ENCODE measurements at regions of chr13 and their contacts with region 1.

Region 1: DNA sequence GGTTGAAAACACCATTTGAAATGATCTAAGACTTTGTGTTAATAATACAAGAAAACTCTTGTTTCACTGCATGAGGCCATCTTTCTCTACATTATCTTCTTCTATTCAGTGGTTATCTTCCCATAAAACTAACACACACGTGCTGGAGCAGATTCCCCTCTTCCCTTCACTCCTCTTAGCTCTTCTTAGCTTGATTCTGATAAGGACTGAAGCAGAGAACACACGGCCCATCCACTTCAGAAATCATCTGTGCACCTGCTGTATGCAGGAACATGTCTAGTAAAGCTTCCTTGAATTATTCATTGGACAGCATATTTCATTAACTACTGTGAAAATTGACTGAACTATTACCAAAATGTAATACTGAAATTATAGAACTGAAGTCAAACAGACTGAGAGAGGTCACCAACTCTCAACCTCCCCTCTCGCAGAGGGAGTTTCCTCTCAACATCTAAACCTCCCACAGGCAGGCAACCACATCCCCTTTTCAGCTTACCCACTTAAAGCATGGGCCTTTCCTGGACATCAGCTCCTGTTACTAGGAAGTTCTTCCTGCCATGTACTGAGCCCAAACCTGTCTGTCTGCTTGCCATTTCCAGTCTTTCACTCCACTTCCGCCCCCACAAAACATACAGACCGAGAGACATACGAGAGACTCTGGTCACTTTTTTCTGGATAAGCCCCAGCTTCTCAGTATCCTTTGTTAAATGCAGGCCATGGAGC is 113.9 kb downstream of the CRYL1 start:
- DNase-seq: peak; percentile 78
- H3K4me3 Mint-ChIP-seq: no peak overlapping the region
- H3K27ac Mint-ChIP-seq: peak overlapping the region; percentile 50
- H3K4me1 Mint-ChIP-seq: peaks cover 21% of the 10 kb centered on the region
- H3K27me3 Mint-ChIP-seq: no peaks in the 10 kb centered on the region

Region 2: DNA sequence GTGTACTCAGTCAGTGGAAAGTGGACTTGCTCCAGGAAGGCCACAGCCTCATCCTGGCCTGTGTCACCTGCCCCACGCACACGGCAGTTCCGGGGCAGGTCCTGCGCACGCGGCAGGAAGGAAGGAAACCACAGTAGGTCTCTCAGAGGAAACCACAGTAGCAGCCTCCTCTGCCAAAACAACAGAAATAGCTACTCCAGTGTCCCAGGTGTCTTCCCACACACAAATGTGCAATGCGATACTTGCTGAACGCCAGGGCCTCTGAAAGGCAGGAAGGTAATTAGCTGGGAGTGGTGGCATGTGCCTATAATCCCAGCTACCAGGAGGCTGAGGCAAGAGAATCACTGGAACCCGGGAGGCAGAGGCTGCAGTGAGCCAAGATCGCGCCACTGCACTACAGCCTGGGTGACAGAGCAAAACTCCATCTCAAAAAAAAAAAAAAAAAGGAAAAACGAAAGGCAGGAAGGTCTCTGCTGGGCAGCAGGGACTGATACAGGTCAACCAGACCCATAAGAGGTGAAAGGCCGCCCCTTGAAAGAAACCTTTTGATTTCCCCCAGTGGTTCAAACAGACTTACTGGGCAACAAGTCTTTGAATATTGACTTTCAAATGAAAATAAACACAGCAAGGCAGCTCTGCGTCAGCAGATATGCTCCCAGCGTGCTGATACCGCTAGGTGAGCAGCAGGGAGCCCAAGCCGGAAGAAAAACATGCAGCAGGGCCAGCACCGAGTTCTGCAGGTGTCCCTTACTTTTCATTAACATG is 64.3 kb after region 1 on chr13:
- CTCF ChIA-PET with region 1: interaction called, 4 read pairs
- intact Hi-C with region 1: loop called (anchors 1 kb)
- DNase-seq: peak; percentile 82
- H3K4me3 Mint-ChIP-seq: peak overlapping the region; percentile 65
- H3K27ac Mint-ChIP-seq: peak overlapping the region; percentile 92
- H3K4me1 Mint-ChIP-seq: peaks cover 27% of the 10 kb centered on the region
- H3K27me3 Mint-ChIP-seq: no peaks in the 10 kb centered on the region

Region 3: GRCh38 chr13:20489185-20489820 is 77.5 kb after region 1 on chr13:
- CTCF ChIA-PET with region 1: interaction called, 5 read pairs
- intact Hi-C with region 1: loop called (anchors 1 kb)
- DNase-seq: peak; percentile 30
- H3K4me3 Mint-ChIP-seq: no peak overlapping the region
- H3K27ac Mint-ChIP-seq: no peak overlapping the region
- H3K4me1 Mint-ChIP-seq: no peaks in the 10 kb centered on the region
- H3K27me3 Mint-ChIP-seq: no peaks in the 10 kb centered on the region

Region 4: GRCh38 chr13:21670883-21671619 is 1259.3 kb after region 1 on chr13 and contains the start of gene FGF9:
- CTCF ChIA-PET with region 1: no interaction called
- intact Hi-C with region 1: no loop called
- DNase-seq: peak; percentile 79
- H3K4me3 Mint-ChIP-seq: peak within 1 kb of the TSS; percentile 80
- H3K27ac Mint-ChIP-seq: no peak within 1 kb of the TSS
- H3K4me1 Mint-ChIP-seq: peaks cover 34% of the 10 kb centered on the region
- H3K27me3 Mint-ChIP-seq: peaks cover 32% of the 10 kb centered on the region
- total RNA-seq, gene FGF9: not detected

Measured in activated naive CD4-positive, alpha-beta T cell treated with anti-CD3 and anti-CD28 coated beads for 36 hours (primary cell).